Activated B cell treated with CpG ODN at 0.5 μM for 24 hours (primary cell): ENCODE measurements at regions of chr1 and their contacts with region 1.

Region 1: DNA sequence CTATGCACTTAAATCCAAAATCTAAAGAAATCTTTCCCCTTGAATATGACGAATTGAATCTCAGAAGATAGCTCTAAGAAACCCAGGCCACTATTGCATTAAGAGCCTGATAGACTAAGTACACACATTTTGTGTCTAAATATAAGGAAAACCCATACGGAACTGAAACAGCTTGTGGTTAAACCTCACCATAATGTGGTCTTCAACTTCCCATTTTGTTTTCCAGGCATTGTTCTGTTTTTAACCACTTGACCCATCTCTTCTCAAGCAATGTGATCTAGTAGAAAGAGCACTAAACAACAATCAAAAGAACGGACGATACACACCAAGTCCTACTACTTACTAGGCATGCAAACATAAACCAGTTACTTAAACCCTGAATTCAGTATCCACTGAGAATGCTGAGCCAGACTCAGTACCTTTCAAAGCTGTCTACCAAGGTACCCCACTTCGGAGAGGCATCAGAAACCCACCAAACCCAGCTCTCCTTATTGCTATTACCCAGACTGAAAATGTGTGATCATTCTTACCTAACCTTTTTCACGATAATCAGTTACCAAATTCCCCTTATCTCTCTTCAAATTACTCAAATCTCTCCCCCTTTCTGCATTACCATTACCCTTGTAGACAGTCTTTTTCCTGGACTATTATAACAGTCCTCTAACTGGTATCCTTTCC is 12.8 kb downstream of the OTUD7B start:
- DNase-seq: no peak
- ATAC-seq: peak; percentile 86
- H3K4me3 Mint-ChIP-seq: peak overlapping the region; percentile 48
- H3K27ac Mint-ChIP-seq: peak overlapping the region; percentile 47
- H3K4me1 Mint-ChIP-seq: peaks cover 39% of the 10 kb centered on the region
- H3K27me3 Mint-ChIP-seq: peaks cover 38% of the 10 kb centered on the region
- CTCF ChIP-seq: no peak

Region 2: DNA sequence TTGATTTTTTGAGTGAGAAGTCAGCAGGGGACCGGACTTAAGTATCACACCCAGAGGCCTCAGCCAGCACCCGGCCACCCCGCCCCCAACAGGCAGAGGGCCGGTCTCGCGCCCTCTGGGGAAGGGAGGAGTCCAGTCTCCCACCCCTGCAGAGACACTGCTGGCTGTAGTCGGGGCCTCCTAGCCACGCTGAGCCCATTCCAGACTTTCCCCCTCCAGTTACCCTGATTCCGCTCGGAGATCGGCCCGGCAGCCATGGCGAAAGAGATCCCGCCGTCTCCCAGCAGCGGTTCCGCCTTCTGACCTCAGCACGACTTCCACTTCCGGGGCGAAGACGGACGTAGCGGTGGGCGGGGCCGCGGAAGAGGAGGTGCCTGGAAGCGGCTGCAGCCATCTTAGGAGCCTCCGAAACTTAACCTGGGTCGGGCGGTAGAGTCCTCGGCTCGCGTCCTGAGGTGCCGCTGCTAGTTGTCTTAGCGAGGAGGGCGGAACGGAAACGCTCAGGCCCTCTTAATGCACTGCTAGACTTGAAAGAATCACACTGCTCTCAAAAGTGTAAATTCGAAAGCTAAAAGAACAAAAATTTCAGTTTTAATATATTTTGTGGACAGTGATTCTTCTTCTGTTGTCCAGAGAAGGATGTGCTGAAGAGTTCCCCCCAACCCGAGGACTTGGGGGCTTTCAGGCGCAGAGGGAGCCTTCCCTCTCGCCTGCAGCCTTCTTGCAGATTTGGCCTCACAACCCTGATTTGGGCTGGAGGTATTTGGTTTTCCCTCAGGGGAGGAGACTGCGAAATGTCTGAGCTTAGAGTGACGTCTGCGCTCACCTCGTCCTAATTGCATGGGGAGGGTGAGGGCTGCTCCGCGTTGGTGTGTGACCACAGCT is 70.0 kb before region 1 on chr1 and contains the start of gene SF3B4:
- CTCF ChIA-PET with region 1: no interaction called
- POLR2A ChIA-PET with region 1: interaction called, 5 read pairs
- intact Hi-C with region 1: loop called (anchors 2 kb)
- DNase-seq: peak; percentile 94
- ATAC-seq: peak; percentile 96
- H3K4me3 Mint-ChIP-seq: peak within 1 kb of the TSS; percentile 98
- H3K27ac Mint-ChIP-seq: peak within 1 kb of the TSS; percentile 95
- H3K4me1 Mint-ChIP-seq: peaks cover 36% of the 10 kb centered on the region
- H3K27me3 Mint-ChIP-seq: peaks cover 12% of the 10 kb centered on the region
- CTCF ChIP-seq: no peak
- total RNA-seq, gene SF3B4: 80.8 and 86.2 TPM in 2 replicates

Region 3: GRCh38 chr1:149937759-149938158 is 60.0 kb before region 1 on chr1:
- CTCF ChIA-PET with region 1: no interaction called
- POLR2A ChIA-PET with region 1: no interaction called
- intact Hi-C with region 1: no loop called
- DNase-seq: no peak
- ATAC-seq: no peak
- H3K4me3 Mint-ChIP-seq: no peak overlapping the region
- H3K27ac Mint-ChIP-seq: no peak overlapping the region
- H3K4me1 Mint-ChIP-seq: peaks cover 5% of the 10 kb centered on the region
- H3K27me3 Mint-ChIP-seq: peaks cover 18% of the 10 kb centered on the region
- CTCF ChIP-seq: no peak

Region 4: GRCh38 chr1:150010393-150011115 is 12.8 kb after region 1 on chr1 and contains the start of gene OTUD7B:
- CTCF ChIA-PET with region 1: no interaction called
- POLR2A ChIA-PET with region 1: interaction called, 19 read pairs
- intact Hi-C with region 1: loop called (anchors 1 kb)
- DNase-seq: peak; percentile 67
- ATAC-seq: peak; percentile 89
- H3K4me3 Mint-ChIP-seq: peak within 1 kb of the TSS; percentile 93
- H3K27ac Mint-ChIP-seq: peak within 1 kb of the TSS; percentile 68
- H3K4me1 Mint-ChIP-seq: peaks cover 15% of the 10 kb centered on the region
- H3K27me3 Mint-ChIP-seq: peaks cover 47% of the 10 kb centered on the region
- CTCF ChIP-seq: no peak
- total RNA-seq, gene OTUD7B: 4.3 and 4.8 TPM in 2 replicates

Region 5: GRCh38 chr1:150034336-150034735 is 36.6 kb after region 1 on chr1:
- CTCF ChIA-PET with region 1: no interaction called
- POLR2A ChIA-PET with region 1: no interaction called
- intact Hi-C with region 1: loop called (anchors 5 kb)
- DNase-seq: no peak
- ATAC-seq: no peak
- H3K4me3 Mint-ChIP-seq: no peak overlapping the region
- H3K27ac Mint-ChIP-seq: no peak overlapping the region
- H3K4me1 Mint-ChIP-seq: no peaks in the 10 kb centered on the region
- H3K27me3 Mint-ChIP-seq: peaks cover 7% of the 10 kb centered on the region
- CTCF ChIP-seq: no peak